ENCODE measurements at regions of chr1 and their contacts with region 1.

Region 1: GRCh38 chr1:193183019-193183627 is 3.3 kb downstream of the B3GALT2 start:
- DNase-seq: no peak
- H3K4me3 Mint-ChIP-seq: no peak overlapping the region
- H3K27ac Mint-ChIP-seq: no peak overlapping the region
- H3K4me1 Mint-ChIP-seq: peaks cover 25% of the 10 kb centered on the region
- H3K27me3 Mint-ChIP-seq: no peaks in the 10 kb centered on the region

Region 2: GRCh38 chr1:193408782-193409293 is 225.7 kb after region 1 on chr1:
- intact Hi-C with region 1: loop called (anchors 2 kb)
- DNase-seq: no peak
- H3K4me3 Mint-ChIP-seq: no peak overlapping the region
- H3K27ac Mint-ChIP-seq: no peak overlapping the region
- H3K4me1 Mint-ChIP-seq: peaks cover 36% of the 10 kb centered on the region
- H3K27me3 Mint-ChIP-seq: no peaks in the 10 kb centered on the region

Region 3: DNA sequence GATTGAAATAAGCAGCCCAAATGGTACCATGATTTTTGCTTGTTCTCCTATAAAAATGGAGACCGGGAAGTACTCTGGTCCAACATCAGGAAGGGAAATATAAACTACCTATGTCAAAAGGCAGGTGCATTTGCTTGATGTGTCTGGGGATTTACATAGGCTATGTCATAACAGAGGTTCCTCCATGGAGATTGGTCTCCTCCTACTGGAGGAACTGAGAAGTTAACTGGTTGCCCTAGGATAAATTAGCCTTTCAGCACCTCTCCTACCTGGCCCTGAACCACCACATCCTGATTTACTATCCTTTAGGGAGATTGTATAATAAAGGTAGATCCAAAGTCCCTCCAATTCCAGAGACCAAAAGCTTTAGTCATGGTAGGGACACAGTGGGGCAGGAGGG is 1112.6 kb after region 1 on chr1:
- intact Hi-C with region 1: loop called (anchors 2 kb)
- DNase-seq: no peak
- H3K4me3 Mint-ChIP-seq: no peak overlapping the region
- H3K27ac Mint-ChIP-seq: no peak overlapping the region
- H3K4me1 Mint-ChIP-seq: peaks cover 17% of the 10 kb centered on the region
- H3K27me3 Mint-ChIP-seq: no peaks in the 10 kb centered on the region